Activated CD8-positive, alpha-beta memory T cell treated with anti-CD3 and anti-CD28 coated beads, Interleukin-2, amount 10 ng/mL, durations not matched to agents 7 days and 5 days (primary cell): ENCODE measurements at regions of chr6 and their contacts with region 1.

Region 1: DNA sequence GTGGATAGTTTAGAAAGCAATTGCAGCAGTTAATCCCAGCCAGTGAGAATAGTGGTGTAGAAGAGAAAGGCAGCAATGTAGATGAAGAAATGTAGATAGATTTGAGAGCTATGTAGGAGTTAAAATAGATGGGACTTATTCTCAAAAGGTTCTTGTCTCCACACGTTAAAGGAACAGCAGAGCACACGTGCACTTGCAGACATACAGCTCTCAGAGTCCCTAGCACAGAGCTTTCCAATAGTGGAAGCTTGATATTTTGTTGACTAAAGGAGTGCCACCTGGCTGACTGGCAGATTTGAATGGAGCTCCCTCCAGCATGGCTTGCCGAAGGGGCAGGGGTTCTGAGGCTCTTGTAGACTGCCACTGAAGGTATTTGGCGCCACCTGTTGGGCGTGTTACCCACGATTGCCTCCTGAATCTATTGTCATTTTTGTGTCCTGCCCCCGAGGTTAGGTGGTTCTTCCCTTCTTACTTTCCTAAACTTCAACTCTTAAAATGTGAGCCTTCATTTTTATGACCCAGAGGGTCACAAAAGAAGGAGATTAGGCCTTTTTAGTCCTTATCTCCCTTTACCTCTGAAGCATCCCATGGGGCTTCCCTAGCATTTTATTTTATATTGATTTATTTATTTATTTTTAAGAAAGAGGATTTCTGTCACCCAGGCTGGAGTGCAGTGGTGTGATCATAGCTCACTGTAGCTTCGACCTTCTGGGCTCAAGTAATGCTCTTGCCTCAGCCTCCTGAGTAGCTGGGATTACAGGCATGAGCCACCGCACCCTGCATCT is 16.4 kb downstream of the BRD2 start:
- DNase-seq: peak; percentile 94
- ATAC-seq: peak; percentile 75
- H3K4me3 Mint-ChIP-seq: no peak overlapping the region
- H3K27ac Mint-ChIP-seq: peak overlapping the region; percentile 42
- H3K4me1 Mint-ChIP-seq: peaks cover 35% of the 10 kb centered on the region
- H3K27me3 Mint-ChIP-seq: no peaks in the 10 kb centered on the region

Region 2: DNA sequence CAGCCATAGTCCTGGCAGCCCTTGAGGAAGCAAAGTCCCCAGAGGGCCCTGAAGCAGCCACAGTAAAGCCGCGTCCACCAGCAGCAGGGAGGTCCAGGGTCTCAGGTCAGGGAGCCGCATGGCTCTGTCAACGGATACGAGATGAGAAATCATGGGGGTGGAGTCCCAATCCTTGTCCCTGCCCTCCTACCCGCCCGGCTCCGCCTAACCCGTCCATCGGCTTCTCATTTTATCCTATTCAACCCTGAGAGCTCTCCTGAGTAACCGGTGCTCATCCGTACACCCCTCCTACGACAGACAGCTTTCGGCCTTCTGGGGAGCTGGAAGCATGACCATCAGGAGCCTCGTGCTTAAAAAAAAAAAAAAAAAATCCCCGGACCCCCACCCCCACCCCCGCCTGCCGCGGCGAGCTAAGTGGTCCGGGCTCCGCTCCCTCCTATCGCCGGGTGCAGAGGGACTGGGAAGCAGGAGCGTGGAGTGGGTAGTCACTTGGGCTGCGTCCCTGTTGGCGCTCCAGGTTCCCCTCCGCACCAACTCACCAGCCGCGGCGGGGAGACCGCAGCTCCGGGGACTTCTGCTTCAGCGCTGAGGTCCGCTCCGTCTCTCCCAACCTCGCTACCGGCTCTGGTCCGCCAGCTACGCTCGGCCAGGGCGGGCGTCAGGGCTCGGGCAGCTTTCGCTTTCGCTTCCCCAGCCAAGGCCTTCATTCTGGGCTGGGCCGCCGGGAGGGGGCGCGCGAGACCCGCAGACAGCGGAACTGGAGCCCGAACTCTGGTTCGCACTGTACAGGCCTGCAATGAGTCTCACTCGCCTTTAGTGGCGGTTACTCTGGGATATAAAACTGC is 146.5 kb before region 1 on chr6 and contains the start of gene TAP2:
- CTCF ChIA-PET with region 1: interaction called, 23 read pairs
- DNase-seq: peak; percentile 98
- ATAC-seq: peak; percentile 82
- H3K4me3 Mint-ChIP-seq: peak within 1 kb of the TSS; percentile 94
- H3K27ac Mint-ChIP-seq: peak within 1 kb of the TSS; percentile 95
- H3K4me1 Mint-ChIP-seq: peaks cover 77% of the 10 kb centered on the region
- H3K27me3 Mint-ChIP-seq: no peaks in the 10 kb centered on the region
- total RNA-seq, gene TAP2: 242 to 258 TPM

Region 3: DNA sequence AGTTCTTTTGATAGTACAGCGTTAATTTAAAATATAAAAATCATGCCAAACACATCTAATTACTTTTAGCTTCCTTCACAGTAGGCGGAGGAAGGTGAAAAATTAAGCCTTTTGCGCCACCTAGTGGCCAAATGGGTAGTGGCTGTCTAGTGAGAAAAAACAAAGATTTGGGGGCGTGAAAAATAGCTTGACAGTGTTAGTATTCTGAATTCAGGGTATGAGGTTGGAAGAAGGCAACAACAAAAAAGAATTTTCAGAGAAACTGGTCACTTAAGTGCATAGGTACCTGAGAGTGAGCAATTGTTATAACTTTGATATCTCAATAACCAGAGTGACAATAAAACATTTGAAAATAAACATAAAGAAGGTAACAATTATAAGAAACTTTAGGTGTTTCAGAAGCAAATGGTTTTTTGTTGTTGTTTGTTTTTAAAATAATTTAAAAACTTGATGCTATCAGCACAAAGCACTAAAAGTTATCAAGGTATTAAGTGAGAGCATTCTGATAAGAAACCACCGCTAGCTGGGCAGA is 116.5 kb before region 1 on chr6:
- CTCF ChIA-PET with region 1: interaction called, 46 read pairs
- DNase-seq: peak; percentile 91
- ATAC-seq: peak; percentile 85
- H3K4me3 Mint-ChIP-seq: no peak overlapping the region
- H3K27ac Mint-ChIP-seq: no peak overlapping the region
- H3K4me1 Mint-ChIP-seq: peaks cover 34% of the 10 kb centered on the region
- H3K27me3 Mint-ChIP-seq: peaks cover 9% of the 10 kb centered on the region

Region 4: DNA sequence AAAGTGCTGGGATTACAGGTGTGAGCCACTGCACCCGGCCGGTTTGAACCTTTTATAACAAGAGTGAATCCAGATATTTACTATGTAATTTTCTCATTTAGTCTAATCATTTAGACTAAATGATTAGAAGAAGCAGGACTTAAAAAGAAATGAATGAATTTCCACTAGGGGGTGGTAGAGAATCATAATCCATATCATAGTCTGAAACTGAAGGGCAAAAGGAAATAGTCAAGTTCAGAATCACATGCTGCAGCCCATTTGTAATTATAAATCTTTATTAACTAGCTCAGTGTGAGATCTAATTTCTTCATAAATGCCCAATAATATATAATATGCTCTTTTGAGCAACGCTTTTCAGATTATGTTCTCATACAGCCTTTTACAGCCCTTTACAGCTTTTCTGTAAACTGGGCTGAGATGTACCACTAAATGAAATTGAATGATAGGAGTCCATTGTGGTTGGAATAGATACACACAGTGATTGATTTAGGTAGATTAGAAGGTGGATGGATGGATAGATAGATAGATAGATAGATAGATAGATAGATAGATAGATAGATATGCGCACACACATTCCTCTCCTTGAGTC is 99.0 kb before region 1 on chr6:
- CTCF ChIA-PET with region 1: interaction called, 122 read pairs
- DNase-seq: no peak
- ATAC-seq: peak; percentile 73
- H3K4me3 Mint-ChIP-seq: no peak overlapping the region
- H3K27ac Mint-ChIP-seq: no peak overlapping the region
- H3K4me1 Mint-ChIP-seq: peaks cover 3% of the 10 kb centered on the region
- H3K27me3 Mint-ChIP-seq: peaks cover 11% of the 10 kb centered on the region

Region 5: GRCh38 chr6:32905078-32905477 is 79.7 kb before region 1 on chr6:
- CTCF ChIA-PET with region 1: interaction called, 15 read pairs
- DNase-seq: no peak
- ATAC-seq: no peak
- H3K4me3 Mint-ChIP-seq: no peak overlapping the region
- H3K27ac Mint-ChIP-seq: no peak overlapping the region
- H3K4me1 Mint-ChIP-seq: no peaks in the 10 kb centered on the region
- H3K27me3 Mint-ChIP-seq: no peaks in the 10 kb centered on the region

Region 6: DNA sequence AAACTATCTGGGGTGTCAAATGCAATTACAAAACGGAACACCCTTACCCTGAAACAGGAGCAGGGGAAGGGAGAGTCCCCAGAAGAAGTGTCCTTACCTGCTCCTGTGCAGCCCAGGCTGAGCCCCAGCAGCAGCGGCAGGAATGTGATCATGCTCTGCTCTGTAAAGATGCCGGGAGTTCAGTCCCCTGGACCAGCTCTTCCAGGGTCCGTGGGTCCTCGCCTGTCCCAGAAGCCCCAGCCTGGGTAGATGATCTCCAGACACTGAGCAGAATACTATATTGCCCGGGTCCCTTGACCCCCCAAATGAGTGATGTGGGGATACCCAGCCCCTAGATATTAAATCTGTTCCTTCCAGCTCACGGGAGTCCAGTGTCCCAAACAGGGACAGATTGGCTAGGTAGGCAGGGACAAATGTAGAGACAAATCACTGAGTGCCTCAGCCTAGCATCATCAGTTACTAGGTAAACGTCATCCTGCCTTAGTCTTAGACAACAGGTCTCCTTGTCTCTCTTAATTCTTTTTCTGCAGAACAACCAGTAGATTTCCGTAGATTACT is 44.1 kb before region 1 on chr6 and contains the start of gene HLA-DMB:
- CTCF ChIA-PET with region 1: interaction called, 60 read pairs
- DNase-seq: peak; percentile 80
- ATAC-seq: peak; percentile 94
- H3K4me3 Mint-ChIP-seq: peak within 1 kb of the TSS; percentile 87
- H3K27ac Mint-ChIP-seq: peak within 1 kb of the TSS; percentile 98
- H3K4me1 Mint-ChIP-seq: peaks cover 67% of the 10 kb centered on the region
- H3K27me3 Mint-ChIP-seq: no peaks in the 10 kb centered on the region
- total RNA-seq, gene HLA-DMB: 22.7 to 31.2 TPM

Region 7: DNA sequence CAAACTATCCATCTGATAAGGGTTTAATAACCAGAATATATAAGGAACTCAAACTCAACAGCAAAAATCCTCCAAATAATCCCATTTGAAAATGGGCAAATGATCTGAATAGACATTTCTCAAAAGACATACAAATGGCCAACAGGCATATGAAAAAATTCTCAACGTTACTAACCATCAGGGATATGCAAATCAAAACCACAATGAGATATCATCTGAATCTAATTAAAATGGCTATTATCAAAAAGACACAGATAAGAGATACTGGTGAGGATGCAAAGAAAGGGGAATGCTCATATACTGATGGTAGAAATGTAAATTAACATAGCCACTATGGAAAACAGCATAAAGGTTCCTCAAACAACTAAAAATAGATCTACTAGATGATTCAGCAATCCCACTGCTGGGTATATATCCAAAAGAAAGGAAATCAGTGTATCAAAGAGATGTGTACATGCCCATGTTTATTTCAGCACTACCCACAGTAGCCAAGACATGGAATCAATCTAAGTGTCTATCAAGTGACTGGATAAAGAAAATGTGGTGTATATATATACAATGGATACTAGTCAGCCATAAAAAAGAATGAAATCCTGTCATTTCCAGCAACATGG is 22.5 kb before region 1 on chr6:
- CTCF ChIA-PET with region 1: interaction called, 194 read pairs
- DNase-seq: no peak
- ATAC-seq: no peak
- H3K4me3 Mint-ChIP-seq: no peak overlapping the region
- H3K27ac Mint-ChIP-seq: no peak overlapping the region
- H3K4me1 Mint-ChIP-seq: peaks cover 52% of the 10 kb centered on the region
- H3K27me3 Mint-ChIP-seq: no peaks in the 10 kb centered on the region